ENCODE measurements at regions of chr12 and their contacts with region 1.

Region 1: DNA sequence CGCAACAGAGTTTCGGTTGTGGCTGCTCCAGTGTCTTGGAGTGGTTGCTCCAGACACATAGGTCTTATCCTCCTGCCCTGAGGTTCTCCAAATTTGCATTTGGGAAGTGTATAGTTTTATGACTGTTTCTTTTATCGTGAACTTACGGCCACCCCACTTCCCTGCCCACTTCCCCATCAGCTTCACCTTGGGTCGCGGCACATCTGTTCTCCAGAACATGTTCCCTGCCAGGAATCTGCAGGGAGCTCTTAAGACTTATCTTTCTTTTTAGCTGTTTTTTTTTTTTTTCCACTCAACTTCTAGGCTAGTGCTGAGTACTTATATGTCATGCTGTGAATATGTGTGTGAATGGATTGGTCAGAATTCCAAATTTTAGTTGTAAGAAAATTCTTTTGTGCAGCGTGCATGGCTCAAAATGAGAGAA is 75.4 kb downstream of the ETV6 start:
- DNase-seq: no peak
- H3K4me3 Mint-ChIP-seq: no peak overlapping the region
- H3K27ac Mint-ChIP-seq: no peak overlapping the region
- H3K4me1 Mint-ChIP-seq: peaks cover 68% of the 10 kb centered on the region
- H3K27me3 Mint-ChIP-seq: no peaks in the 10 kb centered on the region

Region 2: GRCh38 chr12:11702959-11703358 is 21.9 kb before region 1 on chr12:
- intact Hi-C with region 1: loop called (anchors 2 kb)
- DNase-seq: no peak
- H3K4me3 Mint-ChIP-seq: peak overlapping the region; percentile 39
- H3K27ac Mint-ChIP-seq: peak overlapping the region; percentile 88
- H3K4me1 Mint-ChIP-seq: peaks cover 46% of the 10 kb centered on the region
- H3K27me3 Mint-ChIP-seq: no peaks in the 10 kb centered on the region

Region 3: GRCh38 chr12:11771356-11771755 is 46.5 kb after region 1 on chr12:
- intact Hi-C with region 1: loop called (anchors 1 kb)
- DNase-seq: peak; percentile 65
- H3K4me3 Mint-ChIP-seq: peak overlapping the region; percentile 26
- H3K27ac Mint-ChIP-seq: peak overlapping the region; percentile 97
- H3K4me1 Mint-ChIP-seq: peaks cover 78% of the 10 kb centered on the region
- H3K27me3 Mint-ChIP-seq: no peaks in the 10 kb centered on the region

Region 4: DNA sequence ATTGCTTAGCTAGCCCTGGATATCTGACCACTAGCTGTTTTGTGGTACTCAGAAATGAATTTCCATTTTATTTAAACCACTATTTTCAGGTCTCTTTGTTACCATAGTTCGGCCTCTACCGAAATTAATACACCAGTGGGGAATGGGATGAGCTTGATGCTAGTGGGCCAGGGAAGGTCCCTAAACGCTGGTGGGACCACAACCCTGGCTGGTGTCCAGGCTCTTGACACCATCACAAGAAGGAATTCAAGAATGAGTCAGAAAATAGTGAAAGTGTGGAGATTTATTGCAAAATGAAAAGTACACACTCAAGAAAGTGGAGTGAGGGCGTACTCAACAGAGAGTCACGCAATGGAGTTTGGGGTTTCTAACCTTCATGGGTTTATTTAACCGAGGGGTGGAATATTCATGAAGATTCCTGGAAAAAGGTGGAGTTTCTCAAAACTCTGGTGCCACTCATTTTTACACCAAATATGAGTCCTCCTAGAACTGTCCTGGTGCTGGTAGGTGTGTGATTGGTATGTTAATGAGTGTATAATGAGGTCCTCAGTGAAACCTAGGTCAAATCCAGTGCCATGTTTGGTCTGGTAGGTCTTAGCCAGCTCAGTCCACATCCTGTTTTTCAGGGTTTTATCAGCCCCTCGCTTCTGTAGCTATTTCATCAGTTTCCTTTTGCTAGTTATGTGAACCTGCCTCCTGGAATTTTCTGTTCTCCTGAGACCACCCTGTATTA is 580.8 kb after region 1 on chr12:
- intact Hi-C with region 1: no loop called
- DNase-seq: no peak
- H3K4me3 Mint-ChIP-seq: no peak overlapping the region
- H3K27ac Mint-ChIP-seq: no peak overlapping the region
- H3K4me1 Mint-ChIP-seq: no peaks in the 10 kb centered on the region
- H3K27me3 Mint-ChIP-seq: peaks cover 9% of the 10 kb centered on the region

Measured in activated CD4-positive, alpha-beta T cell treated with anti-CD3 and anti-CD28 coated beads, Interleukin-2, amount 10 ng/mL, durations not matched to agents 24 days and 14 days (primary cell).